K562 (cell line): ENCODE measurements at regions of chr2 and their contacts with region 1.

Region 1: DNA sequence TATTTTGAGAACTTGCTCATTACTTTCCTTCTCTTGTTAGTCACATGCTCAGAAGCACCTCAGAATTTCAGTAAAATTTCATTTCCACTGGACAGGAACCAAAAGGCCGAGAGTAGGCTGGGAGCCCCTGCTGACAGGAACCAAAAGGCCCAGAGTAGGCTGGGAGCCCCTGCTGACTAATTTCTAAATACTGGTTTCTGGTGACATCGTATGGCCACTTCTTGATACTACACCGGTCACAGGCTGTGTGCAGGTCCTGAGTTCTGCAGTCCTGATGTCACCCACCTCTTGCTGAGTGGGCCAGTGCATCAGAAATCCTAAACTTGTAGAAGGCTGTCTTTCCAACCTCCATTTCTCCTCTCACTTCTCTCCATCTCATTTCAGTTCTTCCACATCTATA is 17.7 kb upstream of the EN1 start:
- DNase-seq: peak; percentile 48 to 72 (median 58)
- ATAC-seq: peak; percentile 99
- H3K4me3 ChIP-seq: no peak overlapping the region
- H3K27ac ChIP-seq: no peak overlapping the region
- H3K4me1 ChIP-seq: no peaks in the 10 kb centered on the region
- H3K27me3 ChIP-seq: peaks cover 0 to 14% of the 10 kb centered on the region in 2 experiments; a peak in 3 of 5 replicates
- CTCF ChIP-seq: peak; percentile 78 to 84 (median 83)
- EP300 ChIP-seq: no peak
- POLR2A ChIP-seq: no peak
- RAD21 ChIP-seq: peak; percentile 88 to 89

Region 2: GRCh38 chr2:118032169-118033013 is 832.7 kb before region 1 on chr2:
- CTCF ChIA-PET with region 1: no interaction called
- POLR2A ChIA-PET with region 1: no interaction called
- in situ Hi-C with region 1: loop called (anchors 10 kb)
- intact Hi-C with region 1: no loop called
- DNase-seq: peak; percentile 30 to 53 (median 50)
- ATAC-seq: peak; percentile 87
- H3K4me3 ChIP-seq: no peak overlapping the region
- H3K27ac ChIP-seq: no peak overlapping the region
- H3K4me1 ChIP-seq: no peaks in the 10 kb centered on the region
- H3K27me3 ChIP-seq: peaks cover 0 to 2% of the 10 kb centered on the region in 2 experiments; a peak in 2 of 5 replicates
- CTCF ChIP-seq: peak; percentile 40 to 67 (median 66)
- EP300 ChIP-seq: no peak
- POLR2A ChIP-seq: no peak
- RAD21 ChIP-seq: peak in 1 of 2 experiments; percentile 49; a peak in 2 of 4 replicates

Region 3: DNA sequence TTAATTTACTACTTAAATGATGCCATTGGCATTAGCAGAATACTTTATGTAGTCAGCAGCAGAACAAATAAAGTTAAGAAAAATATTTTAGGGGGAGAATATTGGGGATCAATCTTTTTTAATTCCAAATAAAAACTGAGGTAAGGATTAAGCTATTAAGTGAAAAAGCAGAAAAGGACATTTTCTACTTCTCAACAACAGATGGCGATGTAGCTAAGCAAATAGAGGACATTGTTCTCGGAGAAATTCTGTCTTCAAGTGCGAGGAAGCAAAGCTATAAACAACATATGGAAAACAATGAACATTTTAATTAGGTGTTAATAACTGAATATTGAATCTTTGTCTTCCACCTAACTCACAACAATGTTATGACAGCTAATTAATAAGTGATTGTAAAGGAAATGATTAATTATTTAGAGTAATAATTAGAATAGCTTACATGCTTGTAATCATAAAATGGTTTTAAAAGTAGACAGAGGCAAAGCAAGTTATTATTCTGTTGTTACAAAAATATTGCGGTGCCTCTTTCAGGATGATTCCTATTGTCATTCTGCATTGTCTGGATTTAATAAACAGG is 818.4 kb before region 1 on chr2:
- CTCF ChIA-PET with region 1: interaction called, 5 read pairs
- POLR2A ChIA-PET with region 1: no interaction called
- in situ Hi-C with region 1: no loop called
- intact Hi-C with region 1: loop called (anchors 1 kb)
- DNase-seq: peak in 3 of 4 experiments; percentile 15 to 33 (median 20)
- ATAC-seq: peak; percentile 61; the same call in 1 of the 3 replicates
- H3K4me3 ChIP-seq: no peak overlapping the region
- H3K27ac ChIP-seq: no peak overlapping the region
- H3K4me1 ChIP-seq: no peaks in the 10 kb centered on the region
- H3K27me3 ChIP-seq: 0 out of 5 replicates have a peak, but pooled peaks cover 0 to 3% of the 10 kb centered on the region in 2 experiments
- CTCF ChIP-seq: peak; percentile 36 to 76 (median 37); a peak in 3 of 6 replicates
- EP300 ChIP-seq: no peak
- POLR2A ChIP-seq: no peak
- RAD21 ChIP-seq: peak; percentile 71 to 85

Region 4: GRCh38 chr2:118202707-118203303 is 662.3 kb before region 1 on chr2:
- CTCF ChIA-PET with region 1: no interaction called
- POLR2A ChIA-PET with region 1: no interaction called
- in situ Hi-C with region 1: no loop called
- intact Hi-C with region 1: loop called (anchors 5 kb)
- DNase-seq: peak; percentile 47 to 57 (median 50)
- ATAC-seq: peak; percentile 94
- H3K4me3 ChIP-seq: no peak overlapping the region
- H3K27ac ChIP-seq: no peak overlapping the region
- H3K4me1 ChIP-seq: no peaks in the 10 kb centered on the region
- H3K27me3 ChIP-seq: peaks cover 0 to 7% of the 10 kb centered on the region in 2 experiments; a peak in 2 of 5 replicates
- CTCF ChIP-seq: peak; percentile 69 to 76 (median 76)
- EP300 ChIP-seq: no peak
- POLR2A ChIP-seq: no peak
- RAD21 ChIP-seq: peak; percentile 27 to 50

Region 5: DNA sequence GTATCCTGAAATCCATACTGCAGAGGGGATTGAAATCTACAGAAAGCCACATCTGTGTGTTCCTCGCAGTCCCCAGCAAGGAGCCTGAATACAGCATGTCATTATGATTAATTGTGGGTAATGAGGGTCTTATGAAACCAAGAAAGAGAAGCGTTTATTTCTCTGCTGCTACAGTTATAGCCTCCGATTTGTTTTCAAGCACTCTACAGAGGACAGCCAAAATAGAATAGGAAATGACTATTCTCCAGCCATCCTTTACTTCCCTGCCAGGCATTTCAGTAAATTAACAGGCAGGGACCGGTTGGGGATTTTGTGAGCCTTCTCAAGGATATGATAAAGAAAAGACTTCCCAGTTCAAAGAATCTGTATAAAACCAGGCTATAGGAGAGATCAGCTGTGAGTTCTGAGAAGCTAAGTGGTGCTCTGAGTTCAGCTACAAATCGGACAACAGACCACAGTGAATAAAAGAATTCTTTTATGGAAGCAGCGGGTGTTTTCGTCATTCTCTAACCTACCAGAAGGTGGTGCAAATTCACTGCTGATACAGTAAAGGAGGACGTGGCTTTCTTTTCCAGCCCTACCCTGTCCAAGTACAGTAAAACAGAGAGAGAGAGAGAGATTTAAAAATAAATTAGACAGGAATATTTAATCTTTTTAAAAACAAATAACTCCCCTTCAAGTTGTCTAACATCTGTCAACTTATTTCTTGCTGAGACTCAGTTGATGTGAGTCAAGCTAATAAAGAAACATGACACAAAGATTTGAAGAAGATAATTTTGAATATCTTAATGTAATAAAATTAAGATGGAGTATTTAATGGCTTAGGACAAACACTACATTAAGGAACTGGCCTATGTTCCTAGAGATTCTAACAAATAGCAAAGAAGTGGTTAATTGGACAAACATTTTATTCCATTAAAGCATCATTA is 643.2 kb before region 1 on chr2:
- CTCF ChIA-PET with region 1: interaction called, 11 read pairs
- POLR2A ChIA-PET with region 1: no interaction called
- in situ Hi-C with region 1: loop called (anchors 5 kb)
- intact Hi-C with region 1: loop called (anchors 1 kb)
- DNase-seq: peak; percentile 46 to 58 (median 51)
- ATAC-seq: peak; percentile 89
- H3K4me3 ChIP-seq: no peak overlapping the region
- H3K27ac ChIP-seq: no peak overlapping the region
- H3K4me1 ChIP-seq: peaks cover 0 to 7% of the 10 kb centered on the region in 2 experiments; a peak in 1 of 5 replicates
- H3K27me3 ChIP-seq: peaks cover 15 to 26% of the 10 kb centered on the region in 2 experiments
- CTCF ChIP-seq: peak; percentile 58 to 77 (median 61); a peak in 5 of 6 replicates
- EP300 ChIP-seq: no peak
- POLR2A ChIP-seq: no peak
- RAD21 ChIP-seq: peak; percentile 72 to 79

Region 6: DNA sequence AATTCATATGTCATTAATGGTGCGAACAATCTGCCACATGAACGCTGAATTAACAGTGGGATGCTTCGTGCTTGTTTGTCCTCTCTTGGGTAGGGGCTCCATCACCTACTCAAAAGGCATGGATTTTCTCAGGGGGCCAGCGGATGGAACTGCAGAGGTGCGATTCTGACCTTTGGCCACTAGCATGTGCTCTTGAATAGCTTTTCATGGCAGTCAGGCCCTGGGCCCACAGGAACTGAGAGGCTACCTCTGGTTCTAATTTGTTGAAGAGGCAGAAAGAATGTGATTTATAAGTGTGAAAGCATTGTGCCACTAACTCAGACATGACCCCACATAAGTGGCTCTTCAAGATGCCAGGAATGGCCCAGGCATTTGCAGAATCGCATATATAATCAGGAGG is 493.6 kb before region 1 on chr2:
- CTCF ChIA-PET with region 1: no interaction called
- POLR2A ChIA-PET with region 1: no interaction called
- in situ Hi-C with region 1: no loop called
- intact Hi-C with region 1: loop called (anchors 2 kb)
- DNase-seq: peak in 2 of 4 experiments; percentile 45 to 46
- ATAC-seq: peak; percentile 84
- H3K4me3 ChIP-seq: no peak overlapping the region
- H3K27ac ChIP-seq: no peak overlapping the region
- H3K4me1 ChIP-seq: no peaks in the 10 kb centered on the region
- H3K27me3 ChIP-seq: peaks cover 0 to 4% of the 10 kb centered on the region in 2 experiments; a peak in 3 of 5 replicates
- CTCF ChIP-seq: peak; percentile 58 to 73 (median 61)
- EP300 ChIP-seq: no peak
- POLR2A ChIP-seq: no peak
- RAD21 ChIP-seq: peak; percentile 55 to 65

Region 7: GRCh38 chr2:118530976-118531375 is 334.1 kb before region 1 on chr2:
- CTCF ChIA-PET with region 1: no interaction called
- POLR2A ChIA-PET with region 1: no interaction called
- in situ Hi-C with region 1: no loop called
- intact Hi-C with region 1: loop called (anchors 5 kb)
- DNase-seq: no peak
- ATAC-seq: no peak
- H3K4me3 ChIP-seq: no peak overlapping the region
- H3K27ac ChIP-seq: no peak overlapping the region
- H3K4me1 ChIP-seq: no peaks in the 10 kb centered on the region
- H3K27me3 ChIP-seq: peaks cover 0 to 8% of the 10 kb centered on the region in 2 experiments; a peak in 1 of 5 replicates
- CTCF ChIP-seq: no peak
- EP300 ChIP-seq: no peak
- POLR2A ChIP-seq: no peak
- RAD21 ChIP-seq: no peak

Region 8: GRCh38 chr2:118576109-118576855 is 288.8 kb before region 1 on chr2:
- CTCF ChIA-PET with region 1: no interaction called
- POLR2A ChIA-PET with region 1: no interaction called
- in situ Hi-C with region 1: no loop called
- intact Hi-C with region 1: no loop called
- DNase-seq: no peak
- ATAC-seq: no peak
- H3K4me3 ChIP-seq: no peak overlapping the region
- H3K27ac ChIP-seq: no peak overlapping the region
- H3K4me1 ChIP-seq: no peaks in the 10 kb centered on the region
- H3K27me3 ChIP-seq: peaks cover 0 to 21% of the 10 kb centered on the region in 2 experiments; a peak in 3 of 5 replicates
- CTCF ChIP-seq: no peak
- EP300 ChIP-seq: no peak
- POLR2A ChIP-seq: no peak
- RAD21 ChIP-seq: no peak